ENCODE measurements at regions of chrX and their contacts with region 1.

Region 1: DNA sequence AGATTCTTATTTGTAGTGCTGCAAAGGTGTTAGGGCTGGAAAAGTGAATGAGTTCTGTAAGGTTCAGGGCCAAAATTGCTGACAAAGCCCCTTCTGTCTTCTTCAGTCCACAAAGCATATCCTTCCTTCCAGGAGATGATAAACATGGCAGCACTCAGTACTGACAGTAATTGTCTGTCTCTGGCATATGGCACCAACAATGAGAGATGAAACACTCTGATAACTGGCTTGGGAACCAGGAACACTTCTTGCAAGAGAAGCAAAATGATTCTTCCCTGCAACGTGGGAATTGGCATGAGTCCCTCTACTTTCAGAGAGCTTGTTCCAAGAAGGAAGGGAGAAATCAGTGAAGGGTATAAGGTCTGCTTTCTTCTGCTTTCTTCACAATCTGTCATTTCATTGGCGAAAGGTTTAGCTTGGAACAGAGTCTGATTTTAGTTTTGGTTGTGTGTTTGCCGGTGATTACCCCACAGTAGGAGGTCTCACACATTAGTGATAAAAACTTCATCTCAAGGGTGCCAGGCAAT is 963.3 kb downstream of the NLGN4X start:
- DNase-seq: no peak
- ATAC-seq: no peak
- H3K4me3 ChIP-seq: no peak overlapping the region
- H3K27ac ChIP-seq: no peak overlapping the region
- H3K4me1 ChIP-seq: no peaks in the 10 kb centered on the region
- H3K27me3 ChIP-seq: no peaks in the 10 kb centered on the region
- CTCF ChIP-seq: no peak

Region 2: DNA sequence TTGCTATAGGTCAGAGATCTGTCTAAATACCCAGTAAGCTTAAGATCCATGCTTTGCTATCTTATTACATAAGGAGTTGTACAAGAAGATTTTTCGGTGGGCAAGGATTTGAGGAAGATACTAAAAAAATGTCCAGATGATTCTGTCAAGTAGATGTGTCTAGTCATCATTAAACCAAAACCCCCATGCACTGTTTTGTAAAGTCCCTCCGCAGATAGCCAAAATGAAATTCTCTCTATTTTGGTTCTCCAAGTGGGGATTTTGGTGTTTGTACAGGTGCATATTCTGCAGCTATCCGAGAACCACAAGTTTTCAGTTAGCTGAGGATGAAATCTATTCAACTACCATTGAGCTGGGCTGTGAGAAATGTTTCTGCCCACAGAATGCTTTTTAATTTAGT is 31.6 kb before region 1 on chrX:
- CTCF ChIA-PET with region 1: no interaction called
- POLR2A ChIA-PET with region 1: no interaction called
- in situ Hi-C with region 1: no loop called
- intact Hi-C with region 1: no loop called
- DNase-seq: no peak
- ATAC-seq: no peak
- H3K4me3 ChIP-seq: no peak overlapping the region
- H3K27ac ChIP-seq: no peak overlapping the region
- H3K4me1 ChIP-seq: no peaks in the 10 kb centered on the region
- H3K27me3 ChIP-seq: no peaks in the 10 kb centered on the region
- CTCF ChIP-seq: no peak

Region 3: DNA sequence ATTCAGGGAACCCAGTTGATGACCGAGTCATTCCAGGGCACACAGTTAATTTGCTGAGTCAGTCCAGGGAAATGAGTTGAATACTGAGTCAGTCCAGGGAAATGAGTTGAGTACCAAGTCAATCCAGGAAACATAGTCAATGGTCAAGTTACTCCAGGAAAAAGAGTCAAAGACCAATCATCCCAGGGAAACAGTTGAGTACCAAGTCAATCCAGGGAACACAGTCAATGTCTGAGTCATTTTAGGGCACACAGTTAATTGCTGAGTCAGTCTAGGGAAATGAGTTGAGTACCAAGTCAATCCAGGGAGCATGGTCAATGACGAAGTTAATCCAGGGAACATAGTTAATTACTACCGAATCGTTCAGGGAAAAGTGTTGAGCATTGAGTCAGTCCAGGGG is 208.9 kb after region 1 on chrX:
- CTCF ChIA-PET with region 1: no interaction called
- POLR2A ChIA-PET with region 1: no interaction called
- in situ Hi-C with region 1: no loop called
- intact Hi-C with region 1: no loop called
- DNase-seq: no peak
- ATAC-seq: no peak
- H3K4me3 ChIP-seq: no peak overlapping the region
- H3K27ac ChIP-seq: no peak overlapping the region
- H3K4me1 ChIP-seq: no peaks in the 10 kb centered on the region
- H3K27me3 ChIP-seq: no peaks in the 10 kb centered on the region
- CTCF ChIP-seq: no peak

Region 4: GRCh38 chrX:5528057-5528456 is 262.7 kb after region 1 on chrX:
- CTCF ChIA-PET with region 1: interaction called, 11 read pairs
- POLR2A ChIA-PET with region 1: no interaction called
- in situ Hi-C with region 1: no loop called
- intact Hi-C with region 1: no loop called
- DNase-seq: no peak
- ATAC-seq: no peak
- H3K4me3 ChIP-seq: no peak overlapping the region
- H3K27ac ChIP-seq: no peak overlapping the region
- H3K4me1 ChIP-seq: no peaks in the 10 kb centered on the region
- H3K27me3 ChIP-seq: no peaks in the 10 kb centered on the region
- CTCF ChIP-seq: no peak

Measured in Panc1 (cell line).